ENCODE measurements at regions of chr12 and their contacts with region 1.

Region 1: DNA sequence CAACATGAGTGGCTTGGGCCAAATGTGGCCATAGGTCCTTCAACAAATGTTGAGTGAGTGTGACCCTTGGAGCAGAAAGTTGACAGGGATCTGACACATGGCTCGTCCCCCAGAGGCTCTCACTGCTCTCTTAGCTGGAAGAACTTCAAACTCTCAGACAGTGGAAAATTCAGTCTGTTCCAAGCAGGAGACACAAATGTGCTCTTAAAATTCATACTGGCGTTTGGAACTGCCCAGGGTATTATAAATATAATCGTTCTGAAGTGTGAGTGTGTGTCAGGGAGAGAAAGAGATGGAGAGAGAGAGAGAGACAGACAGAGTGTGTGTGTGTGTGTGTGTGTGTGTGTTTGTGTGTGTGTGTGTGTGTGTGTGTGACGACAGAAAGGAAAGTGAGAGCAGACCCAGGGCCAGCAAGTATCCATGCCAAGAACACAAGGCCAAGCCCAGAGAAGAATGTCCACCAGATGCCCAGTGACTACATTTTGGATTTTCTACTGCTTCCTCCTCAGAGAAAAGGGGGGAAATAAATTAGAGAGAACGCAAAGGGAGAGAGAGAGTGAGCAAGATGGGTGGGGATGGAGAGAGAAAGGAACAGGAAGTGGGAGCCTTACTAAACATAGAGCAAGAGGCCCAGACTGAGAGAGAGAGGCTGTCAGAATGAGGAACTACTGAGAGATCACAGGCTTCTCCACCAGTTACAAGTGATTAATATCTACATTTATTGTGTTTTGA is 193.6 kb upstream of the NUDT4 start:
- DNase-seq: peak; percentile 74
- ATAC-seq: peak; percentile 85
- H3K4me3 ChIP-seq: peak overlapping the region in 1 of 5 experiments; percentile 18
- H3K4me3 Mint-ChIP-seq: peak overlapping the region; percentile 64
- H3K27ac ChIP-seq: peak overlapping the region; percentile 45 to 75
- H3K27ac Mint-ChIP-seq: peak overlapping the region; percentile 93
- H3K4me1 ChIP-seq: peaks cover 32 to 44% of the 10 kb centered on the region in 2 donors
- H3K4me1 Mint-ChIP-seq: peaks cover 51% of the 10 kb centered on the region
- H3K27me3 ChIP-seq: no peaks in the 10 kb centered on the region
- H3K27me3 Mint-ChIP-seq: no peaks in the 10 kb centered on the region
- CTCF ChIP-seq: no peak

Region 2: DNA sequence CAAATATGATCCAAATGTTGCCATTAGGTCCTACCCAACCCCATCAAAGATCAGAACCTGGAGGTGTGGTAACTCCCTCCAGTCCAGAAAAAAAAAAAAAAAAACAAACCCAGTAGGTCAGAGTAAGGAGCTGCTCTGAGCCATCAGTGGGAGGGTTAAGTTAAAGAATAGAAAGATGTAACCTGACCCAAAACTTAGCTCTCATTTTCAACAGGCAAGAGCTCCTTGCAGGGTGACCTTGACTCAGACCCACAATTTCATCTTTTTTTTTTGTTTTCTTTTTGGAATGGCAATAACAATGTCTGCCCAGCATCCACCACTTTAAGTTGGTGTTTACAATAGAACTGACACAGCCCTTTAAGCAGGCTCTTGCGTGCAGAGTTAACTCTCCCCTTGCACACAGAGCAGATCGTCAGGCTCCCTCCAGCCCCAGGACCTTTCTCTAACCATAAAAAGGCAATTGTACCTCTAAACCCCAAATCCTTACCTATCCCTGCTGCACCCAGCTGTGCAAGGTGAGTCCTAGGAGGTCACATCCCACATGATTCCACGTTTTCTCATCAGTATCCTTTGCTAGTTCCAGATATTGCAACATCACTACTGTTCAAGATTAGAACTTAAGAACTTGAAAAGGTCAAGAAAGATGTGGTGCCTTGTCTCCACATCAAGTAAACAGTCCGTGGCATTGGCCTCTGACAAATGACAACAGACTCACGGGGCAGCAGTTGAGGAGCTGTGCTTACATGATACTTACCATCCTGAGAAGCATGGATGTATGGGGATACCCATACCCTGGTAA is 76.4 kb before region 1 on chr12:
- CTCF ChIA-PET with region 1: no interaction called
- POLR2A ChIA-PET with region 1: interaction called, 11 read pairs
- intact Hi-C with region 1: no loop called
- DNase-seq: no peak
- ATAC-seq: no peak
- H3K4me3 ChIP-seq: no peak overlapping the region
- H3K4me3 Mint-ChIP-seq: no peak overlapping the region
- H3K27ac ChIP-seq: no peak overlapping the region
- H3K27ac Mint-ChIP-seq: no peak overlapping the region
- H3K4me1 ChIP-seq: no peaks in the 10 kb centered on the region
- H3K4me1 Mint-ChIP-seq: peaks cover 4% of the 10 kb centered on the region
- H3K27me3 ChIP-seq: no peaks in the 10 kb centered on the region
- H3K27me3 Mint-ChIP-seq: no peaks in the 10 kb centered on the region
- CTCF ChIP-seq: no peak

Region 3: DNA sequence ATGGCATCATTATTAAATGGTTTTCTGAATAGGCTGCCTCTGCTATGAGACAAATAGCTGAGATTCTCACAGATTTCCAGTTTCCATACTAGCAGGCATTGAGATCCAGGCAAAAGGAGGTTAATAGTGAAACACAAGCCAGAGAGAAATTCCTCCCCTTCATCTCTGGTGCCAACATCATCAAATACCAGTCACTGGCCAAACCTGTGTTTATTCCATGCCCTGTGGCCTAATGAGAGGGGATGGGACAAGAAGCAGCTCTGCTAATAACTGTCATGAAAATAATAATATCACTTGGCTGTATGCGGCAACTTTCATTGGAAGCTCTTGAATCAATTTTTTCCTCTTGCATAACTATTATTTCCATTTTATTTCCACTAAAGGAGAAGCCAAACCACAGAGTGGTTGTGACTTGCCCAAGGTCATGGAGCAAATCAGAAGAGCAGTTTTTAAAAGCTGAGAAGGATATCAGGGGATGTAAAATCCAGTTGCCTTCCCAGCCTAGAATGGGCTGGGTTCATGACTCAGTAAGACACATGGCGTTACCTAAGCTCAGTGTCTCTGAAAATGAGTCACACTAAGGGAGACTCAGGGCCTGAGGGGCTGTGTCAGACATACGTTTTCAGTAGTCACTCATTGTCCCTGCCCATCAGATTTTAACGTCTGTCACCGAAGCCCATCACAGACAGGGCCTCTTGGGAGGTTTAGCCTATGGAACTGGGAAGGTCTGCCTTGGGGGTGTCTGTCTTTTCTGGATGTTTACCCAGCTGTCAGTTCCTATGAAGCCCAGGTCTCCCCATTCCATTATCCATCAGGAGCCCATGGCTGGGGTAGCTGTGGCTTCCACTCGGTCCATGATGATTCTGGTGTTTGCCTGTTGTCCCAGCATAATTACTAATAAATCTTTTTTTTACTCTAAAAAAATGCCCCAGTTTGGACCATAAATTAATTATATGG is 46.2 kb before region 1 on chr12:
- CTCF ChIA-PET with region 1: no interaction called
- POLR2A ChIA-PET with region 1: interaction called, 7 read pairs
- intact Hi-C with region 1: loop called (anchors 5 kb)
- DNase-seq: no peak
- ATAC-seq: no peak
- H3K4me3 ChIP-seq: peak overlapping the region in 1 of 5 experiments; percentile 41
- H3K4me3 Mint-ChIP-seq: peak overlapping the region; percentile 51
- H3K27ac ChIP-seq: peak overlapping the region; percentile 65 to 87
- H3K27ac Mint-ChIP-seq: peak overlapping the region; percentile 94
- H3K4me1 ChIP-seq: peaks cover 59 to 64% of the 10 kb centered on the region in 2 donors
- H3K4me1 Mint-ChIP-seq: peaks cover 57% of the 10 kb centered on the region
- H3K27me3 ChIP-seq: no peaks in the 10 kb centered on the region
- H3K27me3 Mint-ChIP-seq: no peaks in the 10 kb centered on the region
- CTCF ChIP-seq: no peak

Region 4: GRCh38 chr12:93198086-93198485 is 14.0 kb after region 1 on chr12:
- CTCF ChIA-PET with region 1: no interaction called
- POLR2A ChIA-PET with region 1: no interaction called
- intact Hi-C with region 1: loop called (anchors 2 kb)
- DNase-seq: no peak
- ATAC-seq: no peak
- H3K4me3 ChIP-seq: no peak overlapping the region
- H3K4me3 Mint-ChIP-seq: no peak overlapping the region
- H3K27ac ChIP-seq: no peak overlapping the region
- H3K27ac Mint-ChIP-seq: no peak overlapping the region
- H3K4me1 ChIP-seq: no peaks in the 10 kb centered on the region
- H3K4me1 Mint-ChIP-seq: no peaks in the 10 kb centered on the region
- H3K27me3 ChIP-seq: no peaks in the 10 kb centered on the region
- H3K27me3 Mint-ChIP-seq: peaks cover 6% of the 10 kb centered on the region
- CTCF ChIP-seq: no peak

Region 5: GRCh38 chr12:93467351-93468007 is 283.4 kb after region 1 on chr12 and contains the start of gene MRPL42:
- CTCF ChIA-PET with region 1: no interaction called
- POLR2A ChIA-PET with region 1: no interaction called
- intact Hi-C with region 1: no loop called
- DNase-seq: peak; percentile 95
- ATAC-seq: peak; percentile 93
- H3K4me3 ChIP-seq: peak within 1 kb of the TSS; percentile 64 to 82 (median 78)
- H3K4me3 Mint-ChIP-seq: peak within 1 kb of the TSS; percentile 95
- H3K27ac ChIP-seq: peak within 1 kb of the TSS; percentile 60 to 80
- H3K27ac Mint-ChIP-seq: peak within 1 kb of the TSS; percentile 95
- H3K4me1 ChIP-seq: peaks cover 12 to 17% of the 10 kb centered on the region in 2 donors
- H3K4me1 Mint-ChIP-seq: peaks cover 28% of the 10 kb centered on the region
- H3K27me3 ChIP-seq: no peaks in the 10 kb centered on the region
- H3K27me3 Mint-ChIP-seq: no peaks in the 10 kb centered on the region
- CTCF ChIP-seq: peak; percentile 83
- total RNA-seq, gene MRPL42: 41.9 and 45.2 TPM in 2 replicates

Region 6: GRCh38 chr12:93902736-93903562 is 718.8 kb after region 1 on chr12:
- CTCF ChIA-PET with region 1: no interaction called
- POLR2A ChIA-PET with region 1: no interaction called
- intact Hi-C with region 1: no loop called
- DNase-seq: no peak
- ATAC-seq: no peak
- H3K4me3 ChIP-seq: no peak overlapping the region
- H3K4me3 Mint-ChIP-seq: no peak overlapping the region
- H3K27ac ChIP-seq: no peak overlapping the region
- H3K27ac Mint-ChIP-seq: no peak overlapping the region
- H3K4me1 ChIP-seq: peaks cover 0 to 4% of the 10 kb centered on the region in 2 donors
- H3K4me1 Mint-ChIP-seq: peaks cover 11% of the 10 kb centered on the region
- H3K27me3 ChIP-seq: peaks cover 0 to 4% (median 0%) of the 10 kb centered on the region in 4 experiments
- H3K27me3 Mint-ChIP-seq: peaks cover 4% of the 10 kb centered on the region
- CTCF ChIP-seq: no peak

Measured in B cell (primary cell).